ENCODE measurements at regions of chr7 and their contacts with region 1.

Region 1: GRCh38 chr7:152424348-152425108 is 11.3 kb downstream of the KMT2C start:
- DNase-seq: peak; percentile 57
- ATAC-seq: peak; percentile 37; the same call in 1 of the 2 replicates
- H3K4me3 ChIP-seq: no peak overlapping the region
- H3K27ac ChIP-seq: no peak overlapping the region
- H3K4me1 ChIP-seq: peaks cover 5% of the 10 kb centered on the region; the same call in 1 of the 2 replicates
- H3K27me3 ChIP-seq: no peaks in the 10 kb centered on the region
- CTCF ChIP-seq: no peak
- POLR2A ChIP-seq: no peak
- RAD21 ChIP-seq: no peak

Region 2: GRCh38 chr7:151795168-151795811 is 629.2 kb before region 1 on chr7:
- CTCF ChIA-PET with region 1: no interaction called
- POLR2A ChIA-PET with region 1: no interaction called
- dilution Hi-C with region 1: no loop called
- in situ Hi-C with region 1: no loop called
- intact Hi-C with region 1: no loop called
- DNase-seq: no peak
- ATAC-seq: no peak
- H3K4me3 ChIP-seq: no peak overlapping the region
- H3K27ac ChIP-seq: no peak overlapping the region
- H3K4me1 ChIP-seq: no peaks in the 10 kb centered on the region
- H3K27me3 ChIP-seq: peaks cover 12% of the 10 kb centered on the region
- CTCF ChIP-seq: no peak
- POLR2A ChIP-seq: no peak
- RAD21 ChIP-seq: no peak

Region 3: GRCh38 chr7:152336754-152337368 is 87.7 kb before region 1 on chr7:
- CTCF ChIA-PET with region 1: no interaction called
- POLR2A ChIA-PET with region 1: no interaction called
- dilution Hi-C with region 1: no loop called
- in situ Hi-C with region 1: no loop called
- intact Hi-C with region 1: loop called (anchors 1 kb)
- DNase-seq: peak; percentile 48
- ATAC-seq: peak; percentile 78
- H3K4me3 ChIP-seq: no peak overlapping the region
- H3K27ac ChIP-seq: no peak overlapping the region
- H3K4me1 ChIP-seq: peaks cover 2% of the 10 kb centered on the region; the same call in 1 of the 2 replicates
- H3K27me3 ChIP-seq: no peaks in the 10 kb centered on the region
- CTCF ChIP-seq: peak; percentile 39
- POLR2A ChIP-seq: no peak
- RAD21 ChIP-seq: peak; percentile 50

Measured in IMR-90 (cell line).